GM18951 (cell line): ENCODE measurements at regions of chr4 and their contacts with region 1.

Region 1: GRCh38 chr4:147866532-147867271 is 134.8 kb downstream of the ARHGAP10 start:
- POLR2A ChIP-seq: no peak

Region 2: DNA sequence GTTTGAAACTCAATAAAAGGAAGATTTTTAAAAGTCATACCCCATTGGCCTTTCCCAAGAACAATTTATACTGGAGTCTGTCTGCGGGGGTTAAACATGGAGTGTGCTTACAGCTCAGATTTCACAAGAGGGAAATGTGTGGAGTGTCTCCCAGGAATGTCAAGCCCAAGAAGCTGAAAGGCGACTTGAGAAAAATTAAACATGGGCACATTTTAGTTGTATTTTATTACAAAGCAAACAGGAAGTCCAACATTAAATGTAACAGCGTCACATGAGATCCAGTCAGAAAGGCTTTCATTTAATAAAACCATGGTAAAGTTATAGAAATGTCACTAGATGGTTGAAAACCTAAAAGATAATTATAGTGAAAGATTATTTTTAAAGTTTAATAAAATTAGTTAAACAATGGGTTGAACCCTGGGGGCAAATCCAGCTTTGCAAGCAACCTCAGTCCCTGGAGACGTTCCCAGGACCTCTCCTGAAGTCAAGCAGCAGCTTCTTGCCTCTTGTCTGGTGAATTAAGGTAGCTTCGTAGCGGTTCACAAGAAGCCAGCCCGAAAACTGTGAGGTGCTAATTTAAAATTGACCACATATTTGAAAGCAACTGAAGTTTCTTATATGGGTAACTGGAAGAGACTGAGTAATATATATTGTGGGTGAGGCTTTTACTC is 554.2 kb before region 1 on chr4:
- in situ Hi-C with region 1: no loop called
- POLR2A ChIP-seq: no peak

Region 3: DNA sequence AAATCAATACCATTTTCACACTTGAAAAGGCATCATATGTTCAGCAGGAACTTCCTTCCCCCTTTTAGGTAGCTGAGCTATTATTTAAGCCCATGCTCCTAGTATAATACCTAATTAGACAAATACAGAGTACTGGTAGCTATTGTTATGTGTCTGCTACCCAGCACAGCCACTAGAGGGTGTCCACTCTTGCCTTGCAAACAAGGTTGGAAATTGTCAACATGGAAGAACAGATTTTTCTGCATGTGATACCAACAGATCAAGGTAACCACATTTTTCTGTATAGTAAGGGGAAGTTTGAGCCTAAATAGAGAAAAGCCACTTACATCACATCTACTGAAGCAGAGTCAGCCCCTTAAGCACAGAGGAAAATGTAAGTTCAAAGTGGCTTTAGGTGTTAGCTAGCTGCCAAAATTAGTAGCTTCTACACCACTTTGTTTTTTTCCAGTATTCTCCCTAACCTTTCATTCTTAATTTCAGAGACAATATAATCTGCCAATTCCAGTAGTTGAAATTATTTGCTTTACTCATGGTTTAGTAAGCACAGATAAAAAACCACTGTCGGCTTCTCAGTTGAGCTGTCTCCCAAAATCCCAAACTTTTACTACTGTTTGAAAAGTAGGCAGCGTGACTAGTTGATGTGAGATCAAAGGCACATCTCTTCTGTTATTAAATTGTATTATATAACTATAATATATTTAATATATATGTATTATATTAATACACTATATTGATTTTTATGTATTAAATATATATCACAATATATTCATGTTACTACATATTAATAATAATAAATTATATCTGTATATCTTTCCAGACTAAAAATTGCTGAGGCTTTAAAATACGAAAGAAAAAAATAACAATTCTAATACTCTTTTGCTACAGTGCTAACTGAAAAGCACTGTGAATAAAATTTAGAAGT is 347.6 kb before region 1 on chr4:
- in situ Hi-C with region 1: loop called (anchors 25 kb)
- POLR2A ChIP-seq: no peak

Region 4: GRCh38 chr4:147693218-147693617 is 173.5 kb before region 1 on chr4:
- in situ Hi-C with region 1: loop called (anchors 10 kb)
- POLR2A ChIP-seq: no peak